Vagina (tissue), 2 donors: ENCODE measurements at regions of chr10 and their contacts with region 1.

Region 1: DNA sequence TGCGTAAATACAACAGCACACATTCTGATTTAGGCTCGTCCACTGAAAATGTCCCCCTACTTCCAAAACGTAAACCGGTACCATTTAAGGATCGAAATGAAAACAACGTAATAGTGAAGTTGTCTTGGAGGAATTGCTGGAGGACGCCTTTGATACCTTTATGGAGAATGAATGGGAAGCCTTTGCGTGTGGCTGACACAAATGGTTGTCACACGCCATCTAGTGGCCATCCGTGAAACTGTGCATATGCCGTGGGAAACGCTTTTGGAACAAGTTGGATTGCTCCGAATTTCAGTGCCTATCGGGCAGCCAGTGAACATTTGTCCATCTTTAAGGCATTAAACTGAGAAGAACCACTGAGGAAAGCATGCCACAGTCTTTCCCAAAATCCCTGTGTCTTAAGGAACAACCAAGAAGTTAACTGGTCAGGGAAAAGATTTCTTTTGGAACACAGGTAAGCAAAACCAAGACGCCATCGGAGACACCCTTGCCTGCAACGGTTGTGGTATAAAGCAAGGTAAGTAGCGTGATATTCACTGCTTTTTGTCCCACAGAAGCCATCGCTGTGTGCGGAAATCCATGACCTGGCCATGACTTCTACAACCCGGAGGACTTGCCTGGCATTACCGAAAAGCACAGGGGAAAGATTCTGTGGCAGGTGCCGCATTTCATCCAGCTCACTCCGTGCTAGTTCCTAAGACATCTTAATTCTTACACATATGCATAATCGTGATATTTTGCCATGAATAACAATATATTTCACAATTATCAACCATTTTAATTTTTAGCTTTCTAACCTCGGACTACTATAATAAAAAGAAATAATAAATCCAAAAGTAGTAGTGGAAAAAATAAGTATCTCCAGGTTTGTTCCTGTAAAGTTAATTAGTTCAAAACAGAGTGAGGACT is 100.6 kb downstream of the FAM204A start:
- DNase-seq: no peak
- H3K4me3 ChIP-seq: no peak overlapping the region
- H3K27ac ChIP-seq: no peak overlapping the region
- H3K4me1 ChIP-seq: no peaks in the 10 kb centered on the region
- H3K27me3 ChIP-seq: peaks cover 3% of the 10 kb centered on the region
- CTCF ChIP-seq: peak; percentile 80 to 87 (median 86)
- POLR2A ChIP-seq: no peak

Region 2: GRCh38 chr10:117537436-117537903 is 704.0 kb before region 1 on chr10:
- intact Hi-C with region 1: loop called (anchors 10 kb)
- DNase-seq: no peak
- H3K4me3 ChIP-seq: peak overlapping the region in 1 of 2 donors; percentile 14
- H3K27ac ChIP-seq: peak overlapping the region; percentile 61
- H3K4me1 ChIP-seq: peaks cover 50% of the 10 kb centered on the region
- H3K27me3 ChIP-seq: peaks cover 7% of the 10 kb centered on the region
- CTCF ChIP-seq: peak; percentile 7 to 64 (median 45)
- POLR2A ChIP-seq: no peak